ENCODE measurements at regions of chr9 and their contacts with region 1.

Region 1: DNA sequence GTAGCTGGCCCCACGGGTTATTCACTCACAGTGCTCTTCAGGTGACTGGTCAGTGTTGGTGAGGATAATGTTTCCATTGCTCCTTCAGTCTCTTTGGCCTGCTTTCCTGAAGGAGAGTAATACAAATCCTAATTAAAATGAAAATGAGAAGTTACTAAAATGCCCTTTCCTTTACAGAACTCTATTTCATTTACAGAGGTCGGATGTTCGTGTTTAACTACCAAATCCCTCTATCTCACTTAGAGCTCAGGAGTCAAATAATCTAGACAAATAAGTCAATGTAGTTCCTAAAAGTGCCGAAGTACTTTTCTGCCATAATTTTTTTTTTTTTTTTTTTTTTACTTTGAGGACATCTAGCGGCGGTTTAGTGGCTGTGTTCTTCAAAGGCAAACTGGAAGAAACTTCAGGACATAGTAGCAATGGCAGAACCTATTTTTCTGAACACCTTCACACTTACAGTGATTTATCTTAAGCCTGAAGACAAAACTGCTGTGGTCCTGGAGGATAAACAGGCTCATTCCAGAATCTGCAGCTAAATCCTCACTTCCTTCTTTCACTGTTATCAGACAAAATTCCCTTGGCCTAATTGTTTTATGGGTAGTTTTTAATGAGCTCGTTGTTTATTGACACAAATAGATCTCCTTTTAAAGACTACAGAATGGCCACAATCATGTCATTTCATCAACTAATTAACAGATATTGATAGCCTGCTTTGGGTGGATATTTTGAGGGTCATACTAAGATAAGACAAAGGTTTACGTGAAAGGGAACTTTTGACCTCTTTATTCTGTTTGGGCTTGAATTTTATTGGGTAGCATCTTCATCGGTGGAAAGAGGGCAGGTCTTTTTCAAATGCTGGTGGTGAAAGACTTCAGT is 207.6 kb upstream of the DMRTA1 start:
- DNase-seq: peak in 1 of 4 donors; percentile 23
- ATAC-seq: peak; percentile 53
- H3K4me3 ChIP-seq: no peak overlapping the region
- H3K27ac ChIP-seq: no peak overlapping the region
- H3K4me1 ChIP-seq: no peaks in the 10 kb centered on the region
- H3K27me3 ChIP-seq: no peaks in the 10 kb centered on the region
- CTCF ChIP-seq: peak in 5 of 7 experiments; percentile 22 to 47 (median 40)
- POLR2A ChIP-seq: no peak

Region 2: DNA sequence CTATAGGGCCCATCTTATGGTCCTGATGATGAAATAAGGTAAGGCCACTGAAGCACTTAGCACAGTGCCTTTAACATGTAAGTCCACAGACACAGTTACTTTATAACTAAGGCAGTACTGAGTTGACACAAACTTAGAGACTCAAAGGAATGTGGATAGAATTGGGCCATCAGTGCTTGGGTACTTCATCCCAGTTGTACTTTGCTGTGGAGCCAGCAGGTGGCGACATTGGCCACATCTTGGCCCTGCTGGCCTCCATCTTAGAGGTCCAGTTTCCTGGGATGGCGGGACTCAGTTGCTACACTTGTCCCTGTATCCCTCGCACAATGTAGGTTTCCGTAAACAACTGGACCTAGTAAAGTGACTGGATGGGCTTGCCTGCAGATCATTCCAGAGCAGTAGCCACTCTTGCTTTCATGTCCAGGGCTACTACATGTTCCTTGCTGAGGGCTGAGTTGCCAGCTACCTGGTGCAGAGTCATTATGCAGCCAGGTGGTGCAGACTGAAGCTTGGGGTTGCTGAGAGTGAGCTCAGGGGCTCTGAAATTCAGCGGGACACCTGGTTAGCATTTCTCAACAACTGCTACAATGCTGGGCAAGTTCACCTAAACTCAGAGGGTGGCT is 426.0 kb before region 1 on chr9:
- intact Hi-C with region 1: loop called (anchors 5 kb)
- DNase-seq: peak; percentile 77 to 83 (median 80)
- ATAC-seq: peak; percentile 89
- H3K4me3 ChIP-seq: no peak overlapping the region
- H3K27ac ChIP-seq: no peak overlapping the region
- H3K4me1 ChIP-seq: peaks cover 13% of the 10 kb centered on the region
- H3K27me3 ChIP-seq: no peaks in the 10 kb centered on the region
- CTCF ChIP-seq: peak; percentile 69 to 90 (median 89)
- POLR2A ChIP-seq: no peak

Region 3: GRCh38 chr9:22026696-22027095 is 212.4 kb before region 1 on chr9:
- intact Hi-C with region 1: loop called (anchors 10 kb)
- DNase-seq: no peak
- ATAC-seq: no peak
- H3K4me3 ChIP-seq: no peak overlapping the region
- H3K27ac ChIP-seq: no peak overlapping the region
- H3K4me1 ChIP-seq: peaks cover 10% of the 10 kb centered on the region
- H3K27me3 ChIP-seq: no peaks in the 10 kb centered on the region
- CTCF ChIP-seq: no peak
- POLR2A ChIP-seq: no peak

Measured in body of pancreas (tissue), 4 donors.